Common myeloid progenitor, CD34-positive (primary cell): ENCODE measurements at regions of chr11 and their contacts with region 1.

Region 1: GRCh38 chr11:1598816-1599215 is 722 bp upstream of the KRTAP5-2 start:
- DNase-seq: no peak
- H3K4me3 ChIP-seq: no peak overlapping the region
- H3K27ac ChIP-seq: no peak overlapping the region
- H3K4me1 ChIP-seq: no peaks in the 10 kb centered on the region
- H3K27me3 ChIP-seq: peaks cover 4 to 72% (median 14%) of the 10 kb centered on the region in 5 experiments

Region 2: GRCh38 chr11:1619449-1619848 is 20.6 kb after region 1 on chr11:
- CTCF ChIA-PET with region 1: interaction called, 11 read pairs
- POLR2A ChIA-PET with region 1: no interaction called
- DNase-seq: no peak
- H3K4me3 ChIP-seq: no peak overlapping the region
- H3K27ac ChIP-seq: no peak overlapping the region
- H3K4me1 ChIP-seq: no peaks in the 10 kb centered on the region
- H3K27me3 ChIP-seq: peaks cover 0 to 22% (median 6%) of the 10 kb centered on the region in 5 experiments